ENCODE measurements at regions of chr15 and their contacts with region 1.

Region 1: DNA sequence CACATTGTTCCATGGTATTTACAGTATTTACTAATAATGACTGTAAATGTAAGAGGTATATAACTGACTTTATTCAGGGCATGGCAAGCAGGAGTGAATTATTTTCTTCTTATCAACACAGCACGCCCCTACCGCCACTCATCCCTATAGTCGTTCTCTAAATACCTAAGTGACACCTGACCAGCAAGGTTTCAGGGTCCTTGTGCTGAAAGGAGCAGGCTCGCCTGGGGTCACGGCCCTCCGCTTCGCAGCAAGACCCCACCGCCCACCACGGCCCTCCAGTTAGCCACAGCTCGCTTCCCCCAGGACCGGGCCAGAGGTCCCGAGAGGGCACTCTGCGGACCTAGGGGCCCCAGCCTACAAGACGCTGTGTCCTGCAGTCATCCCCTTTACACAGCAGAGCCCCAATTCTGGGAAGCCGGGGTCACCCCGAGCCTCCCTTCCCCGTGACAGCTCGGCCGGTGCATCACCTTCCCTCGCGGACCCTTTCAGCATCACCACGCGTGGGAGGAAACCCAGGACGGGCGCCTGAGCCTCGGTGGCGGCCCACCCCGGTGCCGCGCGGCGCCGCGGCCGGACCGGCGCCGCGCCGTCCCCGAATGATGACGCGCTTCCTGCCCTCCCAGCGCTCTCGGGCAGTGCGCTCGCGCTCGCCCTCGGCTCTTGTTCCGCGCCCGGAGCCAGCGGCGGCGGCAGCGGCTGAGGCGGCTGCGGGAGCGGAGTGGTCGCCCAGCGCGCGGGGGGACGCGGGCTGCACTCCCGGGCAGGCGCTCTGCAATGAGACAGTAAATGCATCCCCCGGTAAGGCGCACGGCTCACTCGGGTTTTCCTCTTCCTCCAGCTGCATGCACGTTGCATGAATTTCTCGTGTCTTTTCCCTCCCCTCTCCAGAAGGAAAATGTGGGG is 225.1 kb upstream of the C2CD4B start:
- DNase-seq: peak; percentile 86

Region 2: GRCh38 chr15:62455441-62455921 is 65.3 kb after region 1 on chr15:
- intact Hi-C with region 1: loop called (anchors 5 kb)
- DNase-seq: no peak

Region 3: DNA sequence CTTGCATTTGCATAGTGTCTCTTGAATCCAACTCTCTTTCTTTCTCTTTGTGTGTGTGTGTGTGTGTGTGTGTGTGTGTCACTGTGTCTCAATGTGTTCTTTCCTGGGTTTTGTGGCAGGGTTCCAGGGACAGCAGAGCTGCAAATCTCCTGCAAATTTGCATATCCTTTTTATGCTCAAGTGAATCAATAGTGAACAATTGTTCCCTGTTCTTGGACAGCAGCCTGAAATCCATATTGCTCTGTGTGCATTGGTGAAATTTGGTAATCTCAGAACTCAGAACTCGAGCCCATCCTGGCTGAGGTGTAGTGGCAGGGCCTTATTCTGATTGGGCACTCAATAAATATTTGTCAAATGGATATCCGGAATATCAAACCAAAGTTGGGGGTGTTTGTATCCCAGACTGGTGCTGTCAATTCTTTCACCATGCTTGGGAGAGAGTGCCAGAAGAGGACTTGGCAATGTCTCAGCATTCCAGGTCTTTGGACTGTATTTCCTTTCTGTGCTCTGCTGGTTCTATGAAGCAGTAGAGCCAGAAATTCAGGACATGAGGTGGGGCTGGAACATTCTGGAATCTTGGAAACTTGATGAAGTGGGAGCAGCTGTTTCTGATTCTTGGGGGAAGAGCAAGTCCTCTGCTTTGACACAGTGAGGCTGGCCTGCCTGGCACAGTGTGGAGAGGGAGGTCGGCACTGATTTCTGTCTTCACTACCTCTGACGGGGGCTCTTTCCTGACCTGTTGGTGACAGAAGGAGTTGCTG is 155.5 kb after region 1 on chr15:
- intact Hi-C with region 1: loop called (anchors 1 kb)
- DNase-seq: no peak

Region 4: DNA sequence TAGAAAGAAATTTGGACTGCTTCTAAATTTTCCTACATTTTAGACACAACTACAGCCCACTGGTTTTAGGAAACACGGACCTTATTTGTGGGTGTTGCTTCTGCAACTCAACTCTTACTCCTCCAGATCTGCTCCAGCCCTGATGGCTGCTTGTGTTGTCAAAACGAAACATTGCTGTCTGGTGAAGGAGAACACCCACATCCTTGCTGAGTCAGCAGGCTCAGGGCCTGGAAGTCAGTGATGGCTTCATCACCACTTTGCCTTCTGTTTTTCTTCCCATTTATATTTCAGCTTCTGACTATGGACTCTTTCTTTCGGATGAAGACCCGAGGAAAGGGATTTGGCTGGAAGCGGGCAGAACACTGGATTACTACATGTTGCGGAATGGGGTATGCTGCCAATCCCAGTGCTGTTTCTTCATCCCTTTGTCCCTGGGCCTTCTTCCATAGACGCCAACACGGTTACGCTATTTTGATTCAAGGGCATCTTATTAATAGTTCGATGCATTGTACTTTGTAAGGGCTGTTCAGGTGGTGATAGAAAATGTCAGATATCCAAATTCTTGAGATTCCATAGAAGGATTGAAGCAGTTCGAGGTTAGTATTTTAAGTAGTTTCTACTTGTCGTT is 259.8 kb after region 1 on chr15:
- intact Hi-C with region 1: loop called (anchors 1 kb)
- DNase-seq: no peak

Region 5: DNA sequence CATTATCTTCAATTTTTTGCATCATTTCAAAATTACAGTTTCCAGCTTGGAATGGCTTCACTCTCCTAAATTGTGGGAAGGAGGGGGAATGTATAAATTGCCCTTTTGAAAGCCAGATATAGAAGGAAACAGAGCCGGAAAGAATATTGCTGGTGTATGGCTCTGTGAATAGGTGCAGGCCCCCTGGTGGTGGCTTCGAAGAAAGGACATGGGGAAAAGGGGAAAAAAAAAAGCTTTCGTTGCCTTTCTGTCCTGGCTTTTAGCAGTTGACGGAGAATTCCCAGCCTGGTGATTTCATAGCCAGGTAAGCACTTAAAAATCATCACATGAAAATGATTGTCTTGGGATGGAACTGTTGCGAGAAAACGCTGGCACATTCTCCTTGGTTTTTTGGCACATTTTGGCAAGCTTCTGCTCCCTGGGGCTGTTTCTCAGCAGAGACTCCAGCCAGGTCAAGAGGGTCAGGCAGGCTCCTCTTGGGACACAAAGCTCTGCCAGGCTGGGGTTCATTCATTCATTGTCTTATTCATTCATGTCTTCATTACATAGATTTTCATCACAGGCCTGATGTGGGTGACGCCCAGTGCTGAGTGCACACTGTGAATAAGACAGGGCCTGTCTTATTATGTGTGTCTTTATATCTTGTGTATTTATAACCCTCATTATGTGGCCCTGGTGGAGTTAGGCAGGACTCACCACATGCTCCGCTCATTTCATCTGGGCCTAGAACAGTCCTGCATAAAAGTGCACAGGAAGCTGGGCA is 352.5 kb after region 1 on chr15:
- intact Hi-C with region 1: loop called (anchors 2 kb)
- DNase-seq: no peak

Measured in cardiac septum (tissue), 1 donor.